Heart right ventricle (tissue), 16 donors: ENCODE measurements at regions of chr18 and their contacts with region 1.

Region 1: DNA sequence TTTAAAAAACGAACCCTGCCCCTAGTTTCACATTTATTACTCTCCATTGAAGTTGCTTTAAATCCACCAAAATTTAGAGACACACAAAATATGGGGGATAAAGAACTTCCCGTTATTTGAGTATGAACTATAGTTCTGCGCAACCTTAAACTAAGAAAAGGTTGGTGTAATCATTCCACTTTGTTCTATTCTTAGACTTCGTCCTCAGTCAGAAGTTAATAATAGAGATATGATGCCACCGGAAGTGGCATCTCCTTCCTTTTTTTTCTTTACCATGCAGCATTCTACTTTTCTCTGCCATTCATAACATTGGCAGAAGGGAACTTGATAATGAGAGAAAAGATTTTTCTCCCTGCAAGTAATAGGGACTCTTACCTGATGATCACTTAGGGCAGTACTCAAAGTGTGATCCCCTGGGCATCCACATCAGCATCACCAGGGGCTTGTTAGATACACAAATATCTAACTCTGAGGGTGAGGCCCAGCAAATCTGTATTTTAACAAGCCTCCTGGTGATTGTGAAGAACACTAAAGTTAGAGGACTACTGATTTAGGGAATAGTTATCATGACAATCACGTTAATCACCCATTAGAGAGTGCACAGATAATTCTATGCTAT is 147.7 kb upstream of the DTNA start:
- DNase-seq: no peak
- ATAC-seq: peak in 7 of 8 donors; percentile 63 to 93 (median 87)
- H3K4me3 ChIP-seq: peak overlapping the region in 2 of 10 donors; percentile 4
- H3K27ac ChIP-seq: peak overlapping the region in 9 of 10 donors; percentile 12 to 82 (median 66)
- H3K4me1 ChIP-seq: peaks cover 0 to 14% (median 0%) of the 10 kb centered on the region in 9 donors
- H3K27me3 ChIP-seq: no peaks in the 10 kb centered on the region
- CTCF ChIP-seq: no peak

Region 2: GRCh38 chr18:33733376-33733775 is 829.0 kb before region 1 on chr18:
- intact Hi-C with region 1: loop called in 1 of 10 experiments (anchors 5 kb)
- DNase-seq: no peak
- ATAC-seq: no peak
- H3K4me3 ChIP-seq: no peak overlapping the region
- H3K27ac ChIP-seq: no peak overlapping the region
- H3K4me1 ChIP-seq: no peaks in the 10 kb centered on the region
- H3K27me3 ChIP-seq: no peaks in the 10 kb centered on the region
- CTCF ChIP-seq: no peak

Region 3: GRCh38 chr18:34840256-34840815 is 278.0 kb after region 1 on chr18:
- intact Hi-C with region 1: loop called in 1 of 10 experiments (anchors 5 kb)
- DNase-seq: no peak
- ATAC-seq: no peak
- H3K4me3 ChIP-seq: no peak overlapping the region
- H3K27ac ChIP-seq: no peak overlapping the region
- H3K4me1 ChIP-seq: peaks cover 0 to 32% (median 13%) of the 10 kb centered on the region in 9 donors
- H3K27me3 ChIP-seq: no peaks in the 10 kb centered on the region
- CTCF ChIP-seq: no peak